ENCODE measurements at regions of chr5 and their contacts with region 1.

Region 1: DNA sequence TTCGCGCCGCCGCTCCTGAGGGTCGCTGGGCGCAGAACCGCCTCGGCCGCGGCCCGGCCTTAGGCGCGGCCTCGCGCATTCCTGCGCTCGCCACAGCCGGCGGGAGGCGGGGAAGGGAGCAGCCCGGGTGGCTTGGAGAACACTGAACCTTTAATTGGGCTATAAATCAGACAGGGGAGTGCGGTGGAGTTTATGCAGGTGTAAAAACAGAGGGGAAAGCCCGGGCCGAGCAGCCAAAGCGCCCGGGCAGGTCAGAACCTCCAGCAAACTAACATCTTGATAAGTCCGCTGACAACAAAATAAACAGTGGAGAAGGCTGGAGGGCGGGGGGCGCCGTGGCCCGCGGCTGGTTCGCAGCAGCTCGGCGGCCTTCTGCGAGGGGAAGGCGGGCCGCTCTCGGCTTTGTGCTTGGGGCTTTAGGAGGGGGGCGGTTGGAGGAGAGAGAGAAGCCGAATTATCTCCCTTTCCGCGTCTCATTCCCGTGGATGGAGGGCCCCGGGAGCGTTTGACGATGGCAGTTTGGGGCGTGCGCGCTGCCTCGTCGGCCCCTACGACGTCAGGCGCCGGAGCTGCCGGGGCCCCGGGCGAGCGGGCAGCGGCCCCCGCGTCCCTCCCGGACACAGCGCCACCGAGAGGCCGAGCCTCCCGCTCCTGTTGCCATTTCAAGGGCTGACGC is 11.3 kb downstream of the FOXD1 start:
- DNase-seq: peak in 1 of 9 experiments; percentile 33
- ATAC-seq: no peak
- H3K4me3 ChIP-seq: no peak overlapping the region
- H3K4me3 Mint-ChIP-seq: peak overlapping the region; percentile 59
- H3K27ac ChIP-seq: no peak overlapping the region
- H3K27ac Mint-ChIP-seq: no peak overlapping the region
- H3K4me1 ChIP-seq: peaks cover 15% of the 10 kb centered on the region
- H3K4me1 Mint-ChIP-seq: peaks cover 14% of the 10 kb centered on the region
- H3K27me3 ChIP-seq: peaks cover 48 to 65% of the 10 kb centered on the region in 2 experiments
- H3K27me3 Mint-ChIP-seq: peaks cover 79% of the 10 kb centered on the region
- CTCF ChIP-seq: no peak

Region 2: GRCh38 chr5:73295447-73295846 is 141.8 kb before region 1 on chr5:
- CTCF ChIA-PET with region 1: no interaction called
- POLR2A ChIA-PET with region 1: no interaction called
- intact Hi-C with region 1: no loop called
- DNase-seq: no peak
- ATAC-seq: no peak
- H3K4me3 ChIP-seq: no peak overlapping the region
- H3K4me3 Mint-ChIP-seq: no peak overlapping the region
- H3K27ac ChIP-seq: no peak overlapping the region
- H3K27ac Mint-ChIP-seq: no peak overlapping the region
- H3K4me1 ChIP-seq: no peaks in the 10 kb centered on the region
- H3K4me1 Mint-ChIP-seq: peaks cover 16% of the 10 kb centered on the region
- H3K27me3 ChIP-seq: peaks cover 6 to 21% of the 10 kb centered on the region in 2 experiments
- H3K27me3 Mint-ChIP-seq: peaks cover 71% of the 10 kb centered on the region
- CTCF ChIP-seq: no peak

Region 3: DNA sequence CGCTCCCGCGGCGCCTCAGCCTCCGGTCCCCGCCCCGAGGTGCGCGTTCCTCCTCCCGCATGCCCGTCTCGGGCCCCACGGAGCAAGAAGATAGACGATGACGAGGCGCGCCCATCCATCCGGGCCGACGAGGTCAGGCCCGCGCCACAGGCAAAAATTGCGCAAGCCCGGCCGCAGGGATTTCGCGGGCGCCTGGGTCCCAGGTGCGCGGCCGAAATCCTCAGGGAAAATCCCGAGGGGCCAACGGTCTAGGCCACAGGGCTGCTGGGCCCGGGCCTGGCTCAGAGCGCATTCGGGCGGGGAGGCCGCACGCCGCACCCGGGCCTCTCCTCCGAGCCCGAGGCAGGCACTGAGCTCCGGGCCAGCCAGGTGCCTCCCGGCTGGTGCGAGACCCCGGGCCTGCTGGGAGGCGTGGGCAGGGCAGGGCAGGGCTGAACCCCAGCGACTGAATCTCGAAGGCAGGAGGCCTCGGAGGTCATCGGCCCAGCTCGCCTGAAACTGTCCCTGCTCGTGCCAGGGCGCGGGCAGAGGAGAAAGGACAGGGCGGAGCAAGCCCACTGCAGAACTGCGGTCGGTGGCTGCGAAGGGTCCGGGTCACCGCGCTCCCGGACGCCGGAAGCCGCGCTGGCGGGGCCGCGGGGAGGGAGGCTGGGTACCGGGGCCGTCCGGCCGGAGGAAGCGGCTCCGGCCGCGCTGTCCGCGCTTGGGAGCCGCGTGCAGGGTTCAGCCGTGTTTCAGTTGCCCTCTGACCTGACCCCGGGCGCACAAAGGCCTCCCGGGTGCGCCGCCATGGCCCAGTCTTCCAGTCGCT is 55.4 kb before region 1 on chr5:
- CTCF ChIA-PET with region 1: no interaction called
- POLR2A ChIA-PET with region 1: no interaction called
- intact Hi-C with region 1: loop called in 1 of 2 experiments (anchors 5 kb)
- DNase-seq: peak in 3 of 9 experiments; percentile 14 to 20 (median 19)
- ATAC-seq: peak; percentile 20
- H3K4me3 ChIP-seq: no peak overlapping the region
- H3K4me3 Mint-ChIP-seq: peak overlapping the region; percentile 59
- H3K27ac ChIP-seq: no peak overlapping the region
- H3K27ac Mint-ChIP-seq: no peak overlapping the region
- H3K4me1 ChIP-seq: peaks cover 37% of the 10 kb centered on the region
- H3K4me1 Mint-ChIP-seq: peaks cover 28% of the 10 kb centered on the region
- H3K27me3 ChIP-seq: peaks cover 31 to 40% of the 10 kb centered on the region in 2 experiments
- H3K27me3 Mint-ChIP-seq: peaks cover 57% of the 10 kb centered on the region
- CTCF ChIP-seq: no peak

Region 4: DNA sequence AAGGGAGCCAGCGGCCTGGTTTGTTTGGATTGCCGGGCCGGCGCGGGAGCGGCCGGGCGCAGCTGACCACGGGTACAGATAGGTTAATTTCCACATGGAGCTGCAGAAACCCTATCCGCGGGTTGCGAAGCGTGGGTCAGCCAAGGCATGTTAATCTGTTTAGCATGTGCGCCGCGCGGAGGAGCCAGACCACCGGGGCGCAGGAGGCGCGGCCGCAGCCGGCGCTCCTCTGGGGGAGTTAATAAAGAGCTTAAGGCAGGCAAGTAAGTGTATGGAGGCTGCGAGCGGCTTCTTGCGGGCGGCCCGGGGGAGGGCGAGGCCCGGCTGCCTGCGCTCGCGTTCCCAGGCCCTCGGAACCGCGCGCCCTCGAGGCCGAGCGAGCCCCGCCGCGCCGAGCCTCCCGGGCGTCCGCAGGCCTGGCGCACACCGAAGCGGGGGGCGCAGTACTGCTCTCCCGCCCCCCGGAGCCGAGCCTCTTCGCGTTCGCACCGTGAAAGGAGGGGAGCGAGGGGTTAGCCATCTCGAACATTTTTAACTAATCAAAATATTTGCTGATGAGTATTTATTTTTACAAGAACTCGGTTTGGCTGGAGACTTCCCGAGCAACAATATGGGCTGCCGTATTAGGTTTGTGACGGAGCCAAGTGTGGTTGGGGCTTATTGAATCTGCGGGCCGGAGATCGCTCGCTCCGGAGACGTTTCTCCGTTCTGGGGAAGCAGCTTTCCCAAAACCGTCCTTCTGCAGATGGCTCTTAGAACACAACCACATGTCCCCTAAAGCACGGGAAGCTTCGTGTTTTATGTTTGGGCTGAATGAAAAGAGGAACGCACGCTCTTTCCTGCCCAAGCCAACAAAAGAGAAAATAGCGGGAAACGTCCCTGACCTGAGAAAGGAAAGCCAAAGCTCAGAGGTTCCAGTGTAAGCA is 17.5 kb before region 1 on chr5:
- CTCF ChIA-PET with region 1: no interaction called
- POLR2A ChIA-PET with region 1: no interaction called
- intact Hi-C with region 1: loop called in 1 of 2 experiments (anchors 1 kb)
- DNase-seq: no peak
- ATAC-seq: no peak
- H3K4me3 ChIP-seq: no peak overlapping the region
- H3K4me3 Mint-ChIP-seq: peak overlapping the region; percentile 21
- H3K27ac ChIP-seq: no peak overlapping the region
- H3K27ac Mint-ChIP-seq: no peak overlapping the region
- H3K4me1 ChIP-seq: peaks cover 7% of the 10 kb centered on the region
- H3K4me1 Mint-ChIP-seq: peaks cover 14% of the 10 kb centered on the region
- H3K27me3 ChIP-seq: peaks cover 17 to 37% of the 10 kb centered on the region in 2 experiments
- H3K27me3 Mint-ChIP-seq: peaks cover 84% of the 10 kb centered on the region
- CTCF ChIP-seq: no peak

Measured in CD8-positive, alpha-beta T cell (primary cell).